Activated CD8-positive, alpha-beta T cell treated with anti-CD3 and anti-CD28 coated beads for 36 hours (primary cell): ENCODE measurements at regions of chr17 and their contacts with region 1.

Region 1: DNA sequence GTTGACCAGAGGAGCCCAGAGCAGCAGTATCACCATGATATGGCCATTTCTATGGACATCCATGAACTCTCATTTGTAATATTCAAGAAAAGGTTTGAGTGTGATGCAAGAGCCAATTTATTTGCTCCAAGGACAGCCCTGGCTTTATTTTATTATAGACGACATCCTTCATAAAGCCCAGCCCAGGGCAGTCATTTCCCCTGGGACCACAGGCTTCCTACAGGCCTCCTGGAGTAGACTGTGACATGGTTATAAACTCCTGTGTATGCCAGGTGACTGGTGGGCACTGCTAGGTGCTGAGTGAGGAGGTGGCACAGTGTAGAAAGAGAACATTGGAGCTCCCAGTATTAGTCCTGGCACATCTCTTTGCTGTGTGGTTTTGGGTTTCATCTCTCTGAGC is 120.9 kb downstream of the UTP18 start:
- DNase-seq: no peak
- ATAC-seq: no peak
- H3K4me3 Mint-ChIP-seq: no peak overlapping the region
- H3K27ac Mint-ChIP-seq: no peak overlapping the region
- H3K4me1 Mint-ChIP-seq: no peaks in the 10 kb centered on the region
- H3K27me3 Mint-ChIP-seq: peaks cover 3% of the 10 kb centered on the region
- CTCF ChIP-seq: no peak

Region 2: GRCh38 chr17:51351890-51352289 is 29.4 kb before region 1 on chr17:
- CTCF ChIA-PET with region 1: no interaction called
- POLR2A ChIA-PET with region 1: no interaction called
- intact Hi-C with region 1: no loop called
- DNase-seq: no peak
- ATAC-seq: no peak
- H3K4me3 Mint-ChIP-seq: no peak overlapping the region
- H3K27ac Mint-ChIP-seq: no peak overlapping the region
- H3K4me1 Mint-ChIP-seq: no peaks in the 10 kb centered on the region
- H3K27me3 Mint-ChIP-seq: peaks cover 19% of the 10 kb centered on the region
- CTCF ChIP-seq: no peak

Region 3: GRCh38 chr17:51445946-51446533 is 64.8 kb after region 1 on chr17:
- CTCF ChIA-PET with region 1: no interaction called
- POLR2A ChIA-PET with region 1: no interaction called
- intact Hi-C with region 1: loop called (anchors 2 kb)
- DNase-seq: no peak
- ATAC-seq: no peak
- H3K4me3 Mint-ChIP-seq: no peak overlapping the region
- H3K27ac Mint-ChIP-seq: no peak overlapping the region
- H3K4me1 Mint-ChIP-seq: peaks cover 6% of the 10 kb centered on the region
- H3K27me3 Mint-ChIP-seq: peaks cover 2% of the 10 kb centered on the region
- CTCF ChIP-seq: no peak